Activated T-helper 1 cell treated with anti-CD3 and anti-CD28 coated beads, Interleukin-12 subunit alpha, Interleukin-12 subunit beta, Interleukin-2, Interleukin-4 antibody, amounts not matched to agents 30 ng/mL and 10 ng/mL and 1 ng/mL, durations not matched to agents 14 hours and 24 hours and 36 hours (primary cell): ENCODE measurements at regions of chr4 and their contacts with region 1.

Region 1: GRCh38 chr4:73258686-73259570 is at the start of gene ANKRD17:
- DNase-seq: peak; percentile 91
- H3K4me3 Mint-ChIP-seq: peak within 1 kb of the TSS; percentile 99
- H3K27ac Mint-ChIP-seq: peak within 1 kb of the TSS; percentile 99
- H3K4me1 Mint-ChIP-seq: peaks cover 48% of the 10 kb centered on the region
- H3K27me3 Mint-ChIP-seq: no peaks in the 10 kb centered on the region
- total RNA-seq, gene ANKRD17: 68.6 and 72.4 TPM in 2 replicates

Region 2: DNA sequence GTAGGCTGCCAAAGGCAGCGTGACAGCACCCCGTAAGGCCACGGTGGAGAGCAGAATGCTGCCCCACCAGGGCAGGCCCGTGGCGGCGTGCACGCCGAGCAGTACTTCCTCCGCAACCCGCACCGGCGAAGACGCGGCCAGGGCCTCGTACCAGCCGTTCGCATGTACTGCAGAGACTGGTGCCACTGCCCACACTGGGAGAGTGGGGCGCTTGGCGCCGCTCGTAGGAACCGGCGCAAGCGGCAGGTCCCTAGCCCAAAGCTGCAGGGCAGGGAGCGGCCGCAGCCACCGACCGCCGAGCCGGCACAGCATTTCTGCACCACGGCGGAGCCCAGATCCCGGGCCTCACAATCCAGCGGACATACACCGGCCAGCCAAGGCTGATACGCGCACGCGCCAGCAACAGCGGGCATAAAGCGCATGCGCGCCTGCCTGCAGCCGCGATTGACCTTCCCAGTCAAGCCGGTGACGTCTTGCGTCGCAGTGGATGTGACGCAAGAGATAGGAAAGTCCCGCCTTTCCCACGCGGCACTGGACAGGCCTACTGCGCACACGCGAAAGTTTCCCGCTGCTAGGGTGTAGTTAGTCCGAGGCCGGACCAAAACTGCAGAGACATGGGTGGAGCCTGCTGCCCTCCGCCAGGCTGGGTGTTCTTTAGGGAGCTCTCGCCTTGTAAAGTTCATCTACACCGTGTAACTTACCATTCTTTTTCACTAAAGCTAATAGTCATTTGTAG is 189.4 kb before region 1 on chr4 and contains the start of gene COX18:
- intact Hi-C with region 1: loop called (anchors 1 kb)
- DNase-seq: peak; percentile 96
- H3K4me3 Mint-ChIP-seq: peak within 1 kb of the TSS; percentile 92
- H3K27ac Mint-ChIP-seq: peak within 1 kb of the TSS; percentile 99
- H3K4me1 Mint-ChIP-seq: peaks cover 52% of the 10 kb centered on the region
- H3K27me3 Mint-ChIP-seq: no peaks in the 10 kb centered on the region
- total RNA-seq, gene COX18: 19.9 and 22.2 TPM in 2 replicates

Region 3: GRCh38 chr4:73127839-73128453 is 131.0 kb before region 1 on chr4:
- intact Hi-C with region 1: loop called (anchors 1 kb)
- DNase-seq: no peak
- H3K4me3 Mint-ChIP-seq: no peak overlapping the region
- H3K27ac Mint-ChIP-seq: peak overlapping the region; percentile 43
- H3K4me1 Mint-ChIP-seq: no peaks in the 10 kb centered on the region
- H3K27me3 Mint-ChIP-seq: no peaks in the 10 kb centered on the region

Region 4: GRCh38 chr4:73222466-73223257 is 36.3 kb before region 1 on chr4:
- intact Hi-C with region 1: loop called (anchors 1 kb)
- DNase-seq: peak; percentile 60
- H3K4me3 Mint-ChIP-seq: no peak overlapping the region
- H3K27ac Mint-ChIP-seq: no peak overlapping the region
- H3K4me1 Mint-ChIP-seq: peaks cover 37% of the 10 kb centered on the region
- H3K27me3 Mint-ChIP-seq: no peaks in the 10 kb centered on the region

Region 5: GRCh38 chr4:73245955-73246354 is 13.0 kb before region 1 on chr4:
- intact Hi-C with region 1: no loop called
- DNase-seq: no peak
- H3K4me3 Mint-ChIP-seq: no peak overlapping the region
- H3K27ac Mint-ChIP-seq: peak overlapping the region; percentile 14
- H3K4me1 Mint-ChIP-seq: peaks cover 41% of the 10 kb centered on the region
- H3K27me3 Mint-ChIP-seq: no peaks in the 10 kb centered on the region

Region 6: DNA sequence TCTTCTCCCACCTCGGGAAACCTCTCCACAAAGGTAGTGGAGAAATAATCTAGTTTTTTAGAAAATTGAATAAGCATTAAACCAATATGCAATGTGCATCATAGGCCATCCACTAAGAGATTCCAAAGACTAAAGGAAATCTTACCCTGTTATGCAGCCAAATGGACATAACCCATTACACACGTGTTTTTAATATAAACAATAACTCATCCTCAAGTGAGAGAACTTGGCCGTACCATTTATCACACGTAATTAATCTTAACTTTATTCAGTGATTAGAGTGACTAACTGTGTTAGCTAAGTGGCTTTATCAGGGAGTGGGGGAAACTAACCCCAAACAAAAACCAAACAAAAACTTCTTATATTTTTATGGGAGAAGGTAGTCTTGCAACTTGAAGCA is 280.5 kb after region 1 on chr4:
- intact Hi-C with region 1: loop called (anchors 5 kb)
- DNase-seq: no peak
- H3K4me3 Mint-ChIP-seq: no peak overlapping the region
- H3K27ac Mint-ChIP-seq: no peak overlapping the region
- H3K4me1 Mint-ChIP-seq: peaks cover 13% of the 10 kb centered on the region
- H3K27me3 Mint-ChIP-seq: peaks cover 2% of the 10 kb centered on the region

Region 7: DNA sequence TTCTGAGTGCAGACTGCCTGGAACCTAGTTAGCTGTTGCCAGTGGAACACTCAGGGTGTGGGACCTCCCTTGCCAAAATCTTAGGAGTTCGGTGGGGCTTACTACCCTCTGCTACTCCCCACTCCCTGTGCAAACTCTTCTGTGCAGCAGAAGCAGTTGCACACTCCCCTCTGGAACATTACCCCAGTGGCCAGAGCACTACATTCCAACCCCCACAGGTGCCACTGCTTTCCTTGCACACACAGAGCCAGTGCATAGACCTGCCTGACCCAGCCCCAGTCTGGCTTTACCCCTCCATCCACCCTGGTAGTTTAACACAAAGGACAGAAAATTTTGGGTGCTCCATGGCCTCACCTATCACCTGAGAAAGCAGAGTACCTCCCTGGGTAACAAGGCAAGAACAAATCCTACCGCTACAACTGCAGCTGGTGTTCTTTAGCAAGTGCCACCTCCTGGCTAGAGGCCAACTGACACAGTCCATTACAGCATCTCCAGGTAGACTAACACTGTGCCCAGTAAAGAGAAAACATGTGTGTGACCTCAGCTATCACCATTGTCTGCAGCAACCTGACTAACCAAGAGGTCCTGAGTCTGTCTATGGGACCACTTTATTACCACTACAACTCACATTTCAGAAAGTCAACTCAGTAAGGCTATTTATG is 372.8 kb after region 1 on chr4:
- intact Hi-C with region 1: no loop called
- DNase-seq: no peak
- H3K4me3 Mint-ChIP-seq: no peak overlapping the region
- H3K27ac Mint-ChIP-seq: no peak overlapping the region
- H3K4me1 Mint-ChIP-seq: no peaks in the 10 kb centered on the region
- H3K27me3 Mint-ChIP-seq: peaks cover 23% of the 10 kb centered on the region

Region 8: DNA sequence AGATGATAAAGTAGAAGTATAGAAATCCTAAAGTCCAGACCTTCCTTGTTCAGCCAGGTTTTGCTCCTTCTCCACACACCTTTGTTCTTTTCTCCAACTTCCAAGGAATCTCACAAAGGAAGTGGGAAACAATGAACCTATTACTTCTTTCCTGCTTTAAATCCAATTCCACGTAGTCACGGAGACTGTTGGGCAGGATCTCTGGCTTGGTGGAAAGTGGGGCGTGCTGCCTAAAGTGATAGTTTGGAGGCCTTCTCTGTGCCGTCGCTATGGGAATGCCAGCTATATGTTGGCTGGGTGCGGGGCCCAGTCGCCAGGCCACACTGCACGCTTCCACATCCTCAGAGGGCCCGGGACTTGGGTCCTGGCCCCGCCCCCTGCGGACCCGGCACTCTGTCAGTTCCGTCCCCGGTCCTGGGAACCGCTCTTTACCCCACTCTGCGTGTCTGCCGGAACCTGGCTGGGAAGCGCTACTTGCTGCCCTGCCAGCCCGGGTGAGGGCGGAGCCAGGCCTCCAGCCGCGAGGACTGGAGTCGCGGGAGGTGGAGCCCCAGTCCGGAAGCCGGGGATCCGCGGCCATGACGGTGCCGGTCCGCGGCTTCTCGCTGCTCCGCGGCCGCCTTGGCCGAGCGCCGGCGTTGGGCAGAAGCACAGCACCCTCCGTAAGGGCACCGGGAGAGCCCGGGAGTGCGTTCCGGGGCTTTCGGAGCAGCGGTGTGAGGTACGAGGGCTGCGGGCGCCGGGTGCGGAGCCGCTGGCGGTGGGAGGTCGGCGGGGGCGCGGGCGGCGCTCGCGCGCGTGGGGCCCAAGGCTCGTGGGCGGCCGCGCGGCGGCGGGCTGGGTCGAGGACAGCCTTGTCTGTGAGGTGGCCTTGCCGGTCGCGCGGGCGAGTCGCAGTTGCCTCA is 898.9 kb after region 1 on chr4 and contains the start of gene MTHFD2L:
- intact Hi-C with region 1: loop called (anchors 2 kb)
- DNase-seq: peak; percentile 80
- H3K4me3 Mint-ChIP-seq: peak within 1 kb of the TSS; percentile 93
- H3K27ac Mint-ChIP-seq: peak within 1 kb of the TSS; percentile 87
- H3K4me1 Mint-ChIP-seq: peaks cover 30% of the 10 kb centered on the region
- H3K27me3 Mint-ChIP-seq: peaks cover 22% of the 10 kb centered on the region
- total RNA-seq, gene MTHFD2L: 8.9 and 9.9 TPM in 2 replicates